Posterior cingulate gyrus (tissue), 11 donors: ENCODE measurements at regions of chr14 and their contacts with region 1.

Region 1: GRCh38 chr14:88303041-88303440 is 20.0 kb downstream of the KCNK10 start:
- DNase-seq: no peak

Region 2: DNA sequence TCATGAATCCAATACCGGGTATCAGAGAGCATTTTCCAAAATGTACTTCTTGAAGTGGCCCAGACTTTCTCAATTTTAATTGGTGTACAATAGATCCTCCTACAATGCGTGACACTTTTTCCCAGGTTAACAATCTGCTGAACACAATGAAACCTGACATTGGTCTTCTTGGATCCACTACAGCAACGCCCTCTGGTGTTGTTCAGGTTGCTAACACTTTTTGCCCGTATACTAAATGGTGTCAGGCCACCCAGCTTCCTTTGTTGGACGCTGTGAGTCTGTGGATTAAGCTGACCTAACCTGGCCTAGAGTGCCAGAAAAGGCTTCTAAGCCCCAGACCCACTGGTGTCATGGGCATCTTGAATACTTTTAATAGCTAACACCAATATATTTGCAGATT is 69.1 kb before region 1 on chr14:
- intact Hi-C with region 1: no loop called
- DNase-seq: no peak

Region 3: DNA sequence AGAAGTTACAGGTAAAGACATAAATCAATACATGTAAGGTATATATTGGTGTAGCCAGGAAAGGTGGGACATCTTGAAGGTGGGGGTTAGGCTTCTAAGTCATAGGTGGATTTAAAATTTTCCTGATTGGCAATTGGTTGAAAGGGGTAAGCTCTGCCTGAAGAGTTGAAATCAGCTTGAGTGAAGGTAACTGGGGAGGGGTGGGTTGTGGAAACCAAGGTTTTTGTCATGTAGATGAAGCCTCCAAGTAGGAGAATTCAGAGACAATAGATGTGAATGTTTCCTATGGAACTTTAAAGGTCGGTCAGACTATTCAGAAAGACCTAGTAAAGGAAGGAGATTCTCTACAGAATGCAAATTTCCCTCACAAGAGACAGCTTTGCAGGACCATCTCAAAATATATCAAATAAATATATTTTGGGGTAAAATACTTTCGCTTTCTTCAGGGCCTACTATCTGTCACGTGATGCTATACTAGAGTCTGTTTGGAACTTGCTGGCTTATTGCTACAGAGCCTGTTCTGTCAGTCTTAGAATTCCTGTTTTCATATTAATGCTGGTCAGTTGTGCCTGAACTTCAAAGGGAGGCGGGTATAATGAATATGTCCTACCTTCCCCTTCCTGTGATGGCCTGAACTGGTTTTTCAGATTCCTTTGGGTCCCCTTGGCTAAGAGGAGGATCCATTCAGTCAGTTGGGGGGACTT is 61.8 kb after region 1 on chr14:
- intact Hi-C with region 1: loop called (anchors 2 kb)
- DNase-seq: no peak